Endothelial cell of umbilical vein (primary cell): ENCODE measurements at regions of chr12 and their contacts with region 1.

Region 1: GRCh38 chr12:21697904-21698630 is 40.4 kb upstream of the LDHB start:
- DNase-seq: peak; percentile 49
- H3K4me3 ChIP-seq: no peak overlapping the region
- H3K27ac ChIP-seq: no peak overlapping the region
- H3K4me1 ChIP-seq: no peaks in the 10 kb centered on the region
- H3K27me3 ChIP-seq: peaks cover 3 to 5% of the 10 kb centered on the region in 2 experiments
- CTCF ChIP-seq: peak; percentile 17 to 21
- POLR2A ChIP-seq: no peak

Region 2: DNA sequence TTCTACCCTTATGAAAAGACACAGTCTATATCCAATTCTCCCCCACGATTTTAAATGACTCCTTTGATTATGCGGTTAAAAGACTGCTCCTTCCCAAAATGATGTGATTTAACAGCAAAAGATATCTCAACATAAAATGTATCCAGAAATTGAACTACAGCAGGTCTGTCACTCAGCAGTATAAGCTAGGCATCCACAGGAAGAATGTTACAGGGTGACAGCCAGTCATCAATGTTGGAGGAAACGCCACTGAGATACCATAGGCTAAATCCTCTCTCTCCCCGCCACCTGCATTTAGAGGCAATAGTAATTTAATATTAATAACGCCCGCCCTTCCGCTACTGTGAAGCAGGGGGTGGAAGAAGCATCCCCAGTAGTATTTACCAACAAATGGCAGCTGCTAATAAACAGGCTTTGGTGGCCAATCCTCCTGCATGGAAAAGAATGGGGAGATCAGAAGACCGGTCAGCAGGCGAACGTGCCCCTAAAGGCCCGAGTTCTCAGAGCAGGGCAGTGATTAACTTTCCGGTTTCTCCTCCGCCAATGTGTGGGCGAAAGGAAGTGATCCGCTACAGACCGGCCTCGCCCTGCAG is 197.2 kb before region 1 on chr12:
- CTCF ChIA-PET with region 1: no interaction called
- POLR2A ChIA-PET with region 1: no interaction called
- dilution Hi-C with region 1: no loop called
- intact Hi-C with region 1: no loop called
- DNase-seq: peak; percentile 87
- H3K4me3 ChIP-seq: peak overlapping the region; percentile 80 to 92 (median 88)
- H3K27ac ChIP-seq: peak overlapping the region; percentile 87
- H3K4me1 ChIP-seq: peaks cover 31% of the 10 kb centered on the region
- H3K27me3 ChIP-seq: no peaks in the 10 kb centered on the region
- CTCF ChIP-seq: no peak
- POLR2A ChIP-seq: no peak

Region 3: GRCh38 chr12:21677622-21678277 is 20.3 kb before region 1 on chr12:
- CTCF ChIA-PET with region 1: interaction called, 15 read pairs
- POLR2A ChIA-PET with region 1: no interaction called
- dilution Hi-C with region 1: no loop called
- intact Hi-C with region 1: no loop called
- DNase-seq: no peak
- H3K4me3 ChIP-seq: no peak overlapping the region
- H3K27ac ChIP-seq: no peak overlapping the region
- H3K4me1 ChIP-seq: peaks cover 4% of the 10 kb centered on the region
- H3K27me3 ChIP-seq: peaks cover 9 to 11% of the 10 kb centered on the region in 2 experiments
- CTCF ChIP-seq: no peak
- POLR2A ChIP-seq: no peak

Region 4: GRCh38 chr12:21731144-21731543 is 33.1 kb after region 1 on chr12:
- CTCF ChIA-PET with region 1: interaction called, 21 read pairs
- POLR2A ChIA-PET with region 1: no interaction called
- dilution Hi-C with region 1: no loop called
- intact Hi-C with region 1: no loop called
- DNase-seq: no peak
- H3K4me3 ChIP-seq: no peak overlapping the region
- H3K27ac ChIP-seq: no peak overlapping the region
- H3K4me1 ChIP-seq: no peaks in the 10 kb centered on the region
- H3K27me3 ChIP-seq: peaks cover 0 to 3% of the 10 kb centered on the region in 2 experiments
- CTCF ChIP-seq: no peak
- POLR2A ChIP-seq: no peak

Region 5: GRCh38 chr12:21998782-21999181 is 300.7 kb after region 1 on chr12:
- CTCF ChIA-PET with region 1: interaction called, 517 read pairs
- POLR2A ChIA-PET with region 1: no interaction called
- dilution Hi-C with region 1: no loop called
- intact Hi-C with region 1: no loop called
- DNase-seq: no peak
- H3K4me3 ChIP-seq: no peak overlapping the region
- H3K27ac ChIP-seq: no peak overlapping the region
- H3K4me1 ChIP-seq: no peaks in the 10 kb centered on the region
- H3K27me3 ChIP-seq: no peaks in the 10 kb centered on the region
- CTCF ChIP-seq: no peak
- POLR2A ChIP-seq: no peak

Region 6: GRCh38 chr12:22064968-22065367 is 366.9 kb after region 1 on chr12:
- CTCF ChIA-PET with region 1: interaction called, 12 read pairs
- POLR2A ChIA-PET with region 1: no interaction called
- dilution Hi-C with region 1: no loop called
- intact Hi-C with region 1: no loop called
- DNase-seq: no peak
- H3K4me3 ChIP-seq: no peak overlapping the region
- H3K27ac ChIP-seq: no peak overlapping the region
- H3K4me1 ChIP-seq: no peaks in the 10 kb centered on the region
- H3K27me3 ChIP-seq: no peaks in the 10 kb centered on the region
- CTCF ChIP-seq: no peak
- POLR2A ChIP-seq: no peak

Region 7: GRCh38 chr12:22334410-22335290 is 636.6 kb after region 1 on chr12 and contains the start of gene ST8SIA1:
- CTCF ChIA-PET with region 1: interaction called, 12 read pairs
- POLR2A ChIA-PET with region 1: no interaction called
- dilution Hi-C with region 1: no loop called
- intact Hi-C with region 1: loop called (anchors 1 kb)
- DNase-seq: no peak
- H3K4me3 ChIP-seq: peak within 1 kb of the TSS; percentile 30 to 47 (median 39)
- H3K27ac ChIP-seq: no peak within 1 kb of the TSS
- H3K4me1 ChIP-seq: no peaks in the 10 kb centered on the region
- H3K27me3 ChIP-seq: peaks cover 31 to 65% of the 10 kb centered on the region in 2 experiments
- CTCF ChIP-seq: no peak
- POLR2A ChIP-seq: no peak
- total RNA-seq, gene ST8SIA1: not detected in 2 replicates